GM18951 (cell line): ENCODE measurements at regions of chrX and their contacts with region 1.

Region 1: DNA sequence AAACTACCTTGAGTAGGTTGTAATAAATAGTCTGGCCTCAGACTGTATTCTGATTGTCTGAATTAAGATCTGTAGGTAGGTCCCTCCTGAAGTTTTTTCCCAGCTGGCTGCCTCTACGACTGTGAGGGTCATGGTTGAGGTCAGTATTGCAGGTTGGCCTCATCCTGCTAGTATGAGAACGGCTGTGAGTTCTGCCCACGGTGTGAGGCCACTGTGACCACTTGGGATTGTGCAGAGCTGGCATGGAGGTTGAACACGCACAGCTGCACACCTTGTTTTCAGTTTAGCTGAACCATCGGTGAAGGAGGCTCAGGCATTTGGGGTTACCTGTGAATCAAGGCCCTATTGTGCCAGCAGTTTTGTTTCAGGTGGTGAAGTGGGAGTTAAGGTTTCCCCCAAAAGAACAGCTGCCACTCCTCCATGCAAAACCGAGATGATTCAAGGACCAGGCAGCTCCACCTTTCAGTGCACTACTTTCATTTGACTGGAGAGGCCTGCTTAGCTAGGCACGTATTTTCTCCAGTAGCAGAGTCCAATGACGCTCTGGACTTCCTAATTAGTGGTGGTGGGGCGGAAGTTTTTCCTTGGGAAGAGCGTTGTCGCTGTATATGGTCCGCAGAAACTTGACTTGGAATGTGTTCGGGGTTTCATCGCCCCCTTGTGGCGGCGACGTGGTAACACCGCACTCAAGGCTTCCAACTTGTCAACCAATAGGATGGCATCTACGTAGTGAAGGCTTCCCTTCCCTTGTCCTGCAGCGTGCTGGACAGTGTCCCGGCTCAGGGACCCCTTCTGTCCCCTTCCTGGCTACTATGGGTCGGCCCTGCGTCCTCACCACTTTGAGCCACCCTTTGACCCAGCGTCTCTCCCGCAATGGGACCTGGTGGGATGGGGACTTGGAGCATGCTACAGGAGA is 13.8 kb downstream of the CMC4 start:
- POLR2A ChIP-seq: no peak

Region 2: DNA sequence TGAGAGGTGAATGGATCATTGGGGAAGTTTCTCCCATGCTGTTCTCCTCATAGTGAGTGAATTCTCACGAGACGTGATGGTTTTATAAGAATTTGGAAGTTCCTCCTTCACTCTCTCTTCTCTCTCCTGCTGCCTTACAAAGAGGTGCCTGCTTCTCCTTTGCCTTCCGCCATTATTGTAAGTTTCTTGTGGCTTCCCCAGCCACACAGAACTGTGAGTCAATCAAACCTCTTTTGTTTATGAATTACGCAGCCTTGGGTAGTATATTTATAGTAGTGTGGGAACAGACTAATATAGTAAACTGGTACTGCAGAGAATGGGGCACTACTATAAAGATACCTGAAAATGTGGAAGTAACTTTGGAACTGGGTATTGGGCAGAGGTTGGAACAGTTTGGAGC is 396.0 kb before region 1 on chrX:
- in situ Hi-C with region 1: no loop called
- POLR2A ChIP-seq: no peak

Region 3: DNA sequence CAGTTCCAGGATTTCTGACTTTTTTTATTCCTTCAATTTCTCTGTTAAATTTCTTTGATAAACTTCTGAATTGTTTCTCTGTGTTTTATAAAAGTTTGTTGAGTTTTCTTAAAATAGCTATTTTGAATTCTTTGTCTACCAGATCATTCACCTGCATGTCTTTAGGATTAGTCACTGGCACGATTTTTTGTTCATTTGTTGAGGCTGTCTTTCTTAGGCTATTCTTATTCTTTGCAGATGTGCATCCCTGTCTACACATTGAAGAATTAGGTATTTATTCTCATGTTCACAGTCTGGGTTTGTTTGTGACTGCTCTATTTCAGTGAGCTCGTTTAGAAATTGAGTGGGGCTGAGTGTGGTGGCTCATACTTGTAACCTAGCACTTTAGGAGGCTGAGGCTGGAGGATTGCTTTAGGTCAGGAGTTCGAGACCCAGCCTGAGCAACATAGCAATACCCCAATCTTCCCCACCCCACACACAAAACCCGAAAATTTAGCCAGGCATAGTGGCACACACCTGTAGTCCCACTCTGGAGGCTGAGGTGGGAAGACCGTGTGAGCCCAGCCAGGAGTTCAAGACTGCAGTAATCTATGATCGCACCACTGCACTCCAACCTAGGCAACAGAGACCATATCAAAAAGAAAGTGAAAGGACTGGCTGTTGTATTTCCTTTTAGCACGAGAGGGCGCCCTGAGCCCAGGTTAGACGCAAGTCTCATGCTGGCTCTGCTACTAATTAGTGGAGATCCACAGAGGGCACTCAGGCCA is 76.6 kb before region 1 on chrX:
- in situ Hi-C with region 1: loop called (anchors 5 kb)
- POLR2A ChIP-seq: no peak

Region 4: DNA sequence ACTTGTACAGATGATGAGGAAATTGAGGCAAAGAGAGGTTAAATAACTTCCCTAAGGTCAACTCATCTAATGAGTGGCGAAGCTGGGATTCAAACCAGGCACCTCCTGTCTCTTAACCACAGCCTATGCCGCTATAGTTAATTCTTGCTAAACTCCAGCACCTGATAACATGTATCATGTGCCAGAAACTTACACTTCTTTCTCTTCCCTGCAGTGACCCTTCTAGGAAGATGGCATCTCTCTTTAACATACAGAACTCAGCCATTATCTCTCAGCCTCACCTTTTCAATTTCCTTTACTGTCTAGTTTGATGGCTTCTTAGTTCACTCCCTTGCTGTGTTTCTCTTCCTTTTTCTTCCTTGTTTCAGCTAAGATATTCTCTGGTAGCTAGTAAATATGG is 161.6 kb after region 1 on chrX:
- in situ Hi-C with region 1: no loop called
- POLR2A ChIP-seq: no peak